Prostate gland (tissue), 2 donors: ENCODE measurements at regions of chr2 and their contacts with region 1.

Region 1: GRCh38 chr2:99559075-99559662 is 69.4 kb upstream of the REV1 start:
- DNase-seq: peak; percentile 78
- H3K4me3 ChIP-seq: no peak overlapping the region
- H3K27ac ChIP-seq: no peak overlapping the region
- H3K4me1 ChIP-seq: no peaks in the 10 kb centered on the region
- H3K27me3 ChIP-seq: no peaks in the 10 kb centered on the region
- CTCF ChIP-seq: peak; percentile 96 to 98 (median 98)
- POLR2A ChIP-seq: no peak

Region 2: DNA sequence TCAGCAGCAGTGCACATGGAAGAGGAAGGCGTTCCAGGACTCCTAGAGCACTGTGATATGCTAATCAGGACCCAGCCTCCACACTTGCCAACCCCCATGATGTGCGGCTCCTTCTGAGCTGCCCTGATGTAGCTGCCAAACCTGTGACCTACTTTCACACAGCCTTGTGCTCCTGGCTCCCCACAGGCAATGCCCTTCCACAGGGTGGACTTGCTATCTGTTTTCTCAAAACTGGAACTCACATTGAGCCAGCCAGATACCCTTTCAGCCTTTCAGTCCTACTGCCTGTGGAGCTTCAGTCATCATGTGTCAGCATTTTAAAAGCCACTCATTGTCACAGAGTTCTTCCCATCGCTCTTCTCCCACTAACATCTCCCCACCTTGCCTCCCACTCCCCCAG is 401.6 kb after region 1 on chr2:
- intact Hi-C with region 1: no loop called
- DNase-seq: no peak
- H3K4me3 ChIP-seq: no peak overlapping the region
- H3K27ac ChIP-seq: no peak overlapping the region
- H3K4me1 ChIP-seq: no peaks in the 10 kb centered on the region
- H3K27me3 ChIP-seq: no peaks in the 10 kb centered on the region
- CTCF ChIP-seq: no peak
- POLR2A ChIP-seq: no peak

Region 3: DNA sequence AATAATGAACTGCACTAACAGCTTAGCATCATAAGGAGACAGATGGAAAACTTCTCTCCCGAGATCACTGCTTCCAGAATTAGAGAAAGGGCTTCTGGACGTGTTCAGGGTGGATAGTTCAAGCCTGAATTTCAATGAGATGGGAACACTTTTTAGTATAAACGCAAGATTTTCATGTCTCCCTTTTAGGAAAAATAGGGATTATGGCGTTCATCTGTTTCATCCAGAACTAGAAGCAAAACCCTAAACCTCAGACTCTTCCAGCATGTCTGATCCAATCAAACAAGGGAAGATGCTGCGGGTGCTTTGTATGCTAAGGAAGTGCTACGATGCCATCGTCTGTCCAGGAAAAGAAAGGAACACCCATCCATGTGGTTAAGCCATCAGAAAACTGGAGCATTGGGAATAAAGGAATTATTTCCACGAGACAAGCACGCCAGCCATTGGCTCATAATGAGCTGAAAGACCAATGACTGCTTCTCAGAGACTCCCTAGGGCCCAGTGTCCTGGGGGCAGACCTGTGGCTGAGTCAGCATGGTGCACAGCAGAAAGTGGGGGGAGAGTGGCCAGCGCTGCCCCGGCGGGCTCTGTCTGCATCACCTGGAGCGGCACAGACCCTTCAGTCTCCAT is 649.1 kb after region 1 on chr2:
- intact Hi-C with region 1: loop called (anchors 1 kb)
- DNase-seq: no peak
- H3K4me3 ChIP-seq: no peak overlapping the region
- H3K27ac ChIP-seq: no peak overlapping the region
- H3K4me1 ChIP-seq: no peaks in the 10 kb centered on the region
- H3K27me3 ChIP-seq: no peaks in the 10 kb centered on the region
- CTCF ChIP-seq: no peak
- POLR2A ChIP-seq: no peak

Region 4: DNA sequence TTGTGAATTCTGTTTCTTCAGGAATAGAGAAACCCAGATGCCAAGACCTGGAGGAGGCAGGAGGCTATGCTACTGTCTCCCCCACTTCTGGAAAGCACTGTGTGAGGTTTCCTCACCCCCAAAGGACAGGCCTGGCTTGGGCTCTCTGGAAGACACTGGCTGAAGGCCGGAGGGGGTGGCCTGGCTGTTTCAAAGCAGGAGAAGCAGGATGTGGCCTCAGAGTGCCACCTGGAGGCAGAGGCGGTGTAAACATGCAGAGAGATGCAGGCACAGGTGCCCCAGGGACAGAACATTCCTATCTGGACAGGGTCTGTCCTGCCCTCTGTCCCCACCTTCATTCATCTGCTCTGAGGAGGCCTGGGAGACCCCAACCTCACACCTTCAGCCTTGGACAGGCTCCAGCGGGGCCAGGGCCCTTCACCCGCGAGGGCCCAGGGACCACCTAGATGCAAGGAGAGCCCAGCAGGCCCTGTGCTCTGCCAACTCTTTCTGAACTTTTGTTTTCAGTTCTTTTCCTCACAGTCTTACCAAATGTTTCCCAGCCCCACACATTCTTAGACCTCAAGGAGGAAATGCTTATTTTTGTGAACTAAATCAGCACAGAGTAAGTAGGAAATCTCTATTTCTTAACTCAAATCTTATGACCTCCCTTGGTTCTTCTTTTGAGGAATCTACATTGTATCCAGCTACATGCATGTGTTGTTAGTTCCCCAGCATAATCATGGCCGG is 683.9 kb after region 1 on chr2:
- intact Hi-C with region 1: loop called (anchors 1 kb)
- DNase-seq: peak; percentile 60
- H3K4me3 ChIP-seq: no peak overlapping the region
- H3K27ac ChIP-seq: peak overlapping the region in 1 of 2 donors; percentile 15
- H3K4me1 ChIP-seq: no peaks in the 10 kb centered on the region
- H3K27me3 ChIP-seq: no peaks in the 10 kb centered on the region
- CTCF ChIP-seq: peak in 3 of 4 experiments; percentile 56 to 83 (median 69)
- POLR2A ChIP-seq: no peak

Region 5: GRCh38 chr2:100262555-100263320 is 703.6 kb after region 1 on chr2:
- intact Hi-C with region 1: loop called (anchors 5 kb)
- DNase-seq: peak; percentile 29
- H3K4me3 ChIP-seq: no peak overlapping the region
- H3K27ac ChIP-seq: no peak overlapping the region
- H3K4me1 ChIP-seq: no peaks in the 10 kb centered on the region
- H3K27me3 ChIP-seq: no peaks in the 10 kb centered on the region
- CTCF ChIP-seq: peak; percentile 89 to 98 (median 92)
- POLR2A ChIP-seq: no peak